ENCODE measurements at regions of chr13 and their contacts with region 1.

Region 1: GRCh38 chr13:99347911-99348451 is 40.8 kb upstream of the GPR183 start:
- DNase-seq: no peak
- ATAC-seq: no peak
- H3K4me3 ChIP-seq: no peak overlapping the region
- H3K4me3 Mint-ChIP-seq: no peak overlapping the region
- H3K27ac ChIP-seq: peak overlapping the region in 1 of 2 donors; percentile 38
- H3K27ac Mint-ChIP-seq: peak overlapping the region; percentile 97
- H3K4me1 ChIP-seq: peaks cover 84% of the 10 kb centered on the region
- H3K4me1 Mint-ChIP-seq: peaks cover 92% of the 10 kb centered on the region
- H3K27me3 ChIP-seq: no peaks in the 10 kb centered on the region
- H3K27me3 Mint-ChIP-seq: no peaks in the 10 kb centered on the region
- CTCF ChIP-seq: no peak

Region 2: DNA sequence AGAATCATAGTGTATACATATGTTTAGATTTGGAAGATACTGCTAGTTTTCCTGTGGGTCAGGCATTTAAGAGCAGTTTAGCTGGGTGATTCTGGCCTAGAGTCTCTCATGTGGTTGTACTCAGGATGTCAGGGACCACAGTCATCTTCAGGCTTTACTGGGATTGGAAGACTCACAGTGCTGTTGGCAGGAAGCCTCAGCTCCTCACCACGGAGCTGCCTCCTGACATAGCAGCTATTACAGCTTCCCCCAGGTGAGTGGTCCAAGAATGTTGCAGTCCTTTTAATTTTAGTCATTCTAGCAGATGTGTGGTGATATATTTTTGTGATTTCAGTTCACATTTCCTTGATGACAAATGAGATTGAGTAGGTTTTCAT is 72.9 kb before region 1 on chr13:
- CTCF ChIA-PET with region 1: interaction called, 19 read pairs
- POLR2A ChIA-PET with region 1: interaction called, 18 read pairs
- intact Hi-C with region 1: loop called in 1 of 2 experiments (anchors 2 kb)
- DNase-seq: peak in 7 of 14 experiments; percentile 34 to 85 (median 65)
- ATAC-seq: peak; percentile 78
- H3K4me3 ChIP-seq: no peak overlapping the region
- H3K4me3 Mint-ChIP-seq: peak overlapping the region; percentile 49
- H3K27ac ChIP-seq: peak overlapping the region; percentile 16 to 49
- H3K27ac Mint-ChIP-seq: peak overlapping the region; percentile 87
- H3K4me1 ChIP-seq: peaks cover 65% of the 10 kb centered on the region
- H3K4me1 Mint-ChIP-seq: peaks cover 100% of the 10 kb centered on the region
- H3K27me3 ChIP-seq: no peaks in the 10 kb centered on the region
- H3K27me3 Mint-ChIP-seq: no peaks in the 10 kb centered on the region
- CTCF ChIP-seq: no peak

Region 3: DNA sequence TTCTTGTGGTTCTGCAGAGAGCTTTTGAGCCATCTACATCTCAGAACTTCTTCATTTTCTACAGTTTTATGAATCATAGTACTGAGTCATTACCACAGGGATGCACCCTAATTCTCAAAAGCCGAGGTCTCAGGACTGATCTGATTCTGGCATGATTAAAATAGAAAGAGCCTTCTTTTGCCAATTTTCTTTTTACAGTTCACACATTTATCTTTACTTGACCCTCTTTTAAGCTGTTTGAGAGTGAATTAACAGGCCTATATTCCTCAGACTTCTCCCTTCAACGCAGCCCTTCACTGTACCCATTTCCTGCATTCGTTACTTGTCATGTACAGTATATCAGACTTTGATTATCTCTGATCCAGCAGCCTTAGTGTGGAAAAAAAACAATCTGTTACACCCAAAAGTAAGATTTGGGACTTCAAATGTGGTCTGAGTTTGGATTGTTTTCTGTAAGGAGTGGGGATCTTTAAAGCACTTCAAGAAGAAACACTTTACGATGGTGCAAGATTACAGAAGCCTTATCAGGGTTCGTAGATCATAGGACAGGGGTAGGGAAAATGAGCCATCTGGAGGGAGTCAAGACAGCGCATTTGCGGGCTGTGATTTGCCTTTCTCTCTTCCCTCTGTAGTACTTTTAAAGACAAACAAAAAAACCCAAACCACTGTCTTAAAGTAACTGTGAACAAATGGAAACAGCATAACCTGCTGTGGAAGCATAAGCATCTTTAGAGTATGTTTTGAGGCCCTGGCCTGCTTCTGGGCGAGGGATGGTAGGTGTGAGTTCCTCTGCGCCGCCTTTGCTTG is 25.5 kb before region 1 on chr13:
- CTCF ChIA-PET with region 1: interaction called, 10 read pairs
- POLR2A ChIA-PET with region 1: interaction called, 36 read pairs
- intact Hi-C with region 1: loop called (anchors 1 to 5 kb)
- DNase-seq: peak in 7 of 14 experiments; percentile 16 to 84 (median 57)
- ATAC-seq: peak; percentile 72
- H3K4me3 ChIP-seq: peak overlapping the region; percentile 19
- H3K4me3 Mint-ChIP-seq: peak overlapping the region; percentile 59
- H3K27ac ChIP-seq: peak overlapping the region; percentile 69 to 80
- H3K27ac Mint-ChIP-seq: peak overlapping the region; percentile 93
- H3K4me1 ChIP-seq: peaks cover 58% of the 10 kb centered on the region
- H3K4me1 Mint-ChIP-seq: peaks cover 83% of the 10 kb centered on the region
- H3K27me3 ChIP-seq: no peaks in the 10 kb centered on the region
- H3K27me3 Mint-ChIP-seq: no peaks in the 10 kb centered on the region
- CTCF ChIP-seq: no peak

Region 4: GRCh38 chr13:99329477-99329876 is 18.5 kb before region 1 on chr13:
- CTCF ChIA-PET with region 1: interaction called, 5 read pairs
- POLR2A ChIA-PET with region 1: interaction called, 36 read pairs
- intact Hi-C with region 1: loop called (anchors 2 kb)
- DNase-seq: no peak
- ATAC-seq: no peak
- H3K4me3 ChIP-seq: no peak overlapping the region
- H3K4me3 Mint-ChIP-seq: no peak overlapping the region
- H3K27ac ChIP-seq: no peak overlapping the region
- H3K27ac Mint-ChIP-seq: peak overlapping the region; percentile 28
- H3K4me1 ChIP-seq: peaks cover 31% of the 10 kb centered on the region
- H3K4me1 Mint-ChIP-seq: peaks cover 77% of the 10 kb centered on the region
- H3K27me3 ChIP-seq: no peaks in the 10 kb centered on the region
- H3K27me3 Mint-ChIP-seq: no peaks in the 10 kb centered on the region
- CTCF ChIP-seq: no peak

Region 5: DNA sequence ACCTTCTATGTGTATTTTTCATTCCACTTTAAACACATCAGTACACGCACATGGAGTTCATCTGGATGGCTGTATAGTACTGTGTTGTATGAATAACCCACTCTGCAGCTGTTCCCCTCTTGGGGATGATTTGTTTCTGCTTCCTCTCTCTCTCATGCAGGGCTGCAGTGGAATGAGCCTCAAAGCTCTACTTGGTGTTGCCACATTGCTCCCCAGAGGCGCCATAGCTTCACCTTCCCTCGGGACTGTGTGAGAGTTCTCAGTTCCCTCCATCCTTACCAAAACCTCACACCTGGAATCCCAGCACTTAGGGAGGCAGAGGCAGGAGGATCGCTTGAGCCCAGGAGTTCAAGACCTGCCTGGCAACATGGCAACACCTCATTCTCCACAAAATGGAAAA is 12.4 kb before region 1 on chr13:
- CTCF ChIA-PET with region 1: interaction called, 6 read pairs
- POLR2A ChIA-PET with region 1: interaction called, 49 read pairs
- intact Hi-C with region 1: loop called in 1 of 2 experiments (anchors 2 kb)
- DNase-seq: no peak
- ATAC-seq: no peak
- H3K4me3 ChIP-seq: no peak overlapping the region
- H3K4me3 Mint-ChIP-seq: no peak overlapping the region
- H3K27ac ChIP-seq: no peak overlapping the region
- H3K27ac Mint-ChIP-seq: peak overlapping the region; percentile 77
- H3K4me1 ChIP-seq: peaks cover 42% of the 10 kb centered on the region
- H3K4me1 Mint-ChIP-seq: peaks cover 90% of the 10 kb centered on the region
- H3K27me3 ChIP-seq: no peaks in the 10 kb centered on the region
- H3K27me3 Mint-ChIP-seq: no peaks in the 10 kb centered on the region
- CTCF ChIP-seq: no peak

Region 6: GRCh38 chr13:99386911-99387788 is 39.2 kb after region 1 on chr13:
- CTCF ChIA-PET with region 1: interaction called, 6 read pairs
- POLR2A ChIA-PET with region 1: interaction called, 76 read pairs
- intact Hi-C with region 1: loop called in 1 of 2 experiments (anchors 2 kb)
- DNase-seq: peak; percentile 81 to 94 (median 88)
- ATAC-seq: peak; percentile 22
- H3K4me3 ChIP-seq: no peak overlapping the region
- H3K4me3 Mint-ChIP-seq: peak overlapping the region; percentile 21
- H3K27ac ChIP-seq: peak overlapping the region; percentile 31 to 57
- H3K27ac Mint-ChIP-seq: peak overlapping the region; percentile 88
- H3K4me1 ChIP-seq: peaks cover 67% of the 10 kb centered on the region
- H3K4me1 Mint-ChIP-seq: peaks cover 61% of the 10 kb centered on the region
- H3K27me3 ChIP-seq: no peaks in the 10 kb centered on the region
- H3K27me3 Mint-ChIP-seq: no peaks in the 10 kb centered on the region
- CTCF ChIP-seq: peak; percentile 88

Region 7: GRCh38 chr13:99425485-99426341 is 77.7 kb after region 1 on chr13:
- CTCF ChIA-PET with region 1: no interaction called
- POLR2A ChIA-PET with region 1: interaction called, 16 read pairs
- intact Hi-C with region 1: no loop called
- DNase-seq: peak in 13 of 14 experiments; percentile 31 to 78 (median 62)
- ATAC-seq: peak; percentile 53
- H3K4me3 ChIP-seq: peak overlapping the region; percentile 15
- H3K4me3 Mint-ChIP-seq: peak overlapping the region; percentile 64
- H3K27ac ChIP-seq: peak overlapping the region; percentile 81 to 87
- H3K27ac Mint-ChIP-seq: peak overlapping the region; percentile 92
- H3K4me1 ChIP-seq: peaks cover 67% of the 10 kb centered on the region
- H3K4me1 Mint-ChIP-seq: peaks cover 72% of the 10 kb centered on the region
- H3K27me3 ChIP-seq: no peaks in the 10 kb centered on the region
- H3K27me3 Mint-ChIP-seq: no peaks in the 10 kb centered on the region
- CTCF ChIP-seq: no peak

Region 8: GRCh38 chr13:99528547-99528946 is 180.6 kb after region 1 on chr13:
- CTCF ChIA-PET with region 1: no interaction called
- POLR2A ChIA-PET with region 1: no interaction called
- intact Hi-C with region 1: no loop called
- DNase-seq: peak in 12 of 14 experiments; percentile 10 to 68 (median 30)
- ATAC-seq: peak; percentile 74
- H3K4me3 ChIP-seq: no peak overlapping the region
- H3K4me3 Mint-ChIP-seq: no peak overlapping the region
- H3K27ac ChIP-seq: no peak overlapping the region
- H3K27ac Mint-ChIP-seq: no peak overlapping the region
- H3K4me1 ChIP-seq: peaks cover 24% of the 10 kb centered on the region
- H3K4me1 Mint-ChIP-seq: peaks cover 62% of the 10 kb centered on the region
- H3K27me3 ChIP-seq: no peaks in the 10 kb centered on the region
- H3K27me3 Mint-ChIP-seq: no peaks in the 10 kb centered on the region
- CTCF ChIP-seq: peak; percentile 63

Region 9: DNA sequence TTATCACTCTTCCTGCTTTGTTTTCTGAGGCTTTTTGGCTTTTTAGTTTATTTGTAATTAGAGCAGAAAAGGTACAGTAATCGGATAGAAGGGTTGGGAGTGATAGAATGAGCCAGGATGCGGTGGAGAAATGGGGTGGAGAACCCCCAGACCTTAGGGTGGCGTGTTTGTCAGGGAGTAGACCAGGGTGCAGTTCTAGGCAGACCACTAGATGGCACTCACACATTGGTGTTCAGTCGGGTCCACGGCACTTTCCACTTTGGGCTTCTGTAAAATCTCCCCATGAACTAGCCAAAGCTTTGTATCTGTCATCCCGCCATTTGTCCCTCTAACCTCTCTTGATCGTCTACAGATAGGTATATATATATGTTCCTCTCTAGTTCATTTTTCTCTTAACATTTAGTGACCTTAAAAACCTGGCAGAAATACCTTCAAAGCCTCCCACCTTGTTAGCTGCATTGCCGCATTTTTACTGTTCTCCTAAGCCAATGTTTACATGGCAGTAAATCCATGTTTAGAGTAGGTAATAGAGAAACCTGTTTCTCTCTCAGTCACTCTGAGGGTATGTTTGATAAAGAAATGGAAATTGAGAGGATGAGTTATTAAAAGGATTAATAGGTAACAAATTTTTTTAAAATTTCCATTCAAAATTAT is 308.2 kb after region 1 on chr13:
- CTCF ChIA-PET with region 1: no interaction called
- POLR2A ChIA-PET with region 1: no interaction called
- intact Hi-C with region 1: no loop called
- DNase-seq: peak; percentile 74 to 93 (median 82)
- ATAC-seq: peak; percentile 61
- H3K4me3 ChIP-seq: peak overlapping the region; percentile 37
- H3K4me3 Mint-ChIP-seq: peak overlapping the region; percentile 76
- H3K27ac ChIP-seq: peak overlapping the region; percentile 19 to 29
- H3K27ac Mint-ChIP-seq: peak overlapping the region; percentile 97
- H3K4me1 ChIP-seq: peaks cover 37% of the 10 kb centered on the region
- H3K4me1 Mint-ChIP-seq: peaks cover 48% of the 10 kb centered on the region
- H3K27me3 ChIP-seq: no peaks in the 10 kb centered on the region
- H3K27me3 Mint-ChIP-seq: no peaks in the 10 kb centered on the region
- CTCF ChIP-seq: peak; percentile 93